Activated T-helper 1 cell treated with anti-CD3 and anti-CD28 coated beads, Interleukin-12 subunit alpha, Interleukin-12 subunit beta, Interleukin-2, Interleukin-4 antibody, amounts not matched to agents 30 ng/mL and 10 ng/mL and 1 ng/mL, durations not matched to agents 14 hours and 24 hours and 36 hours (primary cell): ENCODE measurements at regions of chr5 and their contacts with region 1.

Region 1: DNA sequence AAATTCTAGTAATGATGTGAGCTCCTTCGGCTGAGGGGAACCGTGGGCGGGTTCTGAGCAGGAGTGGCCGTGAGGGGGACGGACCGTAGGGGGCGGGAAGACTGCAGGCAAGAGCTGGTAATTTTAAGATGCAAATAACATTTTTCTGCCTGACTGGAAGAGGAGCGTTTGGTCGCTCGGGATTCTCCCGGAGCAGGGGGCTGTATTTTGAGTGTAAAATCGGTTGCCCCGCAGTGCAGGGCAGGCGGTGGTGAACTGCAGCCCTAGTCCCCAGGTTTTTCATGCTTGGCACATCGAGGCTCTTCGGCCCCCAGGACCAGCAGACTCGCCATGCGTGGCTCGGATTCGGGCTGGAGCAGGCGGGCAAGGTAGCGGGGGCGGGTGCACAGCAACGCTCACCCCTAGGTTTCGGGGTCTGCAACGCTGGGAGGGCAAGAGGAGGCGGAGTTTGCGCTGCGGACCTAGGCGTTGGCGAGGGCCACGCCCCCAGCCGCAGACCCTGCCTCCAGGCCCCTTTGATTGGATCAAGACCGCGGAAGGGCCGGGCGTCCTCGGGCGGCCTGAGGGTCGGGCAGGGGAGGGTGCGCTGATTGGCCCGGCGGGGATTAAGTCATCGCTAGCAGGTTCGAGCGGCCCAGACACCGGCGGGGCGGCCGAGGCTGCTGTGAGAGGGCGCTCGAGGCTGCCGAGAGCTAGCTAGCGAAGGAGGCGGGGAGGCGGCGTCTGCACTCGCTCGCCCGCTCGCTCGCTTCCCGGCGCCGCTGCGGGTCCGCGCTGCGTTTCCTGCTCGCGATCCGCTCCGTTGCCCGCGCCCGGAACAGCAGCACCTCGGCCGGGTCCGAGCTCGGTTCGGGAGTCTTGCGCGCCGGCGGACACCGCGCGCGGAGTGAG is at the start of gene ARHGAP26:
- DNase-seq: peak; percentile 93
- H3K4me3 Mint-ChIP-seq: peak within 1 kb of the TSS; percentile 91
- H3K27ac Mint-ChIP-seq: peak within 1 kb of the TSS; percentile 89
- H3K4me1 Mint-ChIP-seq: peaks cover 43% of the 10 kb centered on the region
- H3K27me3 Mint-ChIP-seq: peaks cover 7% of the 10 kb centered on the region
- total RNA-seq, gene ARHGAP26: 20.0 and 21.2 TPM in 2 replicates

Region 2: GRCh38 chr5:142356716-142357473 is 413.1 kb before region 1 on chr5:
- intact Hi-C with region 1: loop called (anchors 2 kb)
- DNase-seq: peak; percentile 88
- H3K4me3 Mint-ChIP-seq: peak overlapping the region; percentile 84
- H3K27ac Mint-ChIP-seq: peak overlapping the region; percentile 92
- H3K4me1 Mint-ChIP-seq: peaks cover 58% of the 10 kb centered on the region
- H3K27me3 Mint-ChIP-seq: no peaks in the 10 kb centered on the region

Region 3: GRCh38 chr5:142474431-142475074 is 295.4 kb before region 1 on chr5:
- intact Hi-C with region 1: no loop called
- DNase-seq: no peak
- H3K4me3 Mint-ChIP-seq: no peak overlapping the region
- H3K27ac Mint-ChIP-seq: peak overlapping the region; percentile 34
- H3K4me1 Mint-ChIP-seq: peaks cover 15% of the 10 kb centered on the region
- H3K27me3 Mint-ChIP-seq: no peaks in the 10 kb centered on the region

Region 4: DNA sequence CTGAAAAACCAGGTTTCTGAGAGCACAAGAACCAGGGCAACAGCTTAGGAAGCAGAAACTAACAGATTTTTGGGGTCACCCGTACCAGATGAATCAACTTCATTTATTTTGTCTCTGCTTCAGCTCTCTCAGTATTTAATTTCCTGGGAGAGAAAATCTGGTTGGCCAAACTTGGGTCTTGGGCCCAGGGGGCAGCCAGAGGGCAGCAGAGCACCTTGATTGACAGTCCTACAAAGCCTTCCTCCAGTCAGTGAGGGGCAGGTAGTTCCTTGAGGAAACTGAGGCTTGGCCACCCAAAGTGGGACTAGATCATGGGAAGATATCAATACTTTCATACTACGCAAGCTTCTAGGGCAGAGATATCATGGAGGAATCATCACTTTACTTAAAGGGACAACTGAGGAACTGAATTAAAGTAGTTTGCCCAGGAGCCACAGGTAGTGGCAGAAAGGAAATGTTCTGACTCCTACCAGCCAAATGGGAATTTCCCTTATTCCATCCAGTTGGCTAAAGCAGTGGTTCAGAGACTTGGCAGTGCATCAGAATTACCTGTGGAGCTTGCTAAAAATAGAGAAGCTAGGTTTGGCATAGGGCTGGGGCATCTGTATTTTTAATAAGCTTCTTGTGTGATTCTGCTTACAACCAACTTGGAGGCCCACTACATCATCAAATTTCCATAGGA is 21.3 kb before region 1 on chr5:
- intact Hi-C with region 1: loop called (anchors 1 kb)
- DNase-seq: no peak
- H3K4me3 Mint-ChIP-seq: no peak overlapping the region
- H3K27ac Mint-ChIP-seq: no peak overlapping the region
- H3K4me1 Mint-ChIP-seq: peaks cover 16% of the 10 kb centered on the region
- H3K27me3 Mint-ChIP-seq: peaks cover 2% of the 10 kb centered on the region

Region 5: GRCh38 chr5:142800776-142801494 is 30.9 kb after region 1 on chr5:
- intact Hi-C with region 1: loop called (anchors 1 kb)
- DNase-seq: peak; percentile 53
- H3K4me3 Mint-ChIP-seq: peak overlapping the region; percentile 73
- H3K27ac Mint-ChIP-seq: peak overlapping the region; percentile 93
- H3K4me1 Mint-ChIP-seq: peaks cover 67% of the 10 kb centered on the region
- H3K27me3 Mint-ChIP-seq: no peaks in the 10 kb centered on the region

Region 6: GRCh38 chr5:142826741-142827732 is 57.1 kb after region 1 on chr5:
- intact Hi-C with region 1: loop called (anchors 1 kb)
- DNase-seq: no peak
- H3K4me3 Mint-ChIP-seq: peak overlapping the region; percentile 25
- H3K27ac Mint-ChIP-seq: peak overlapping the region; percentile 57
- H3K4me1 Mint-ChIP-seq: peaks cover 70% of the 10 kb centered on the region
- H3K27me3 Mint-ChIP-seq: no peaks in the 10 kb centered on the region

Region 7: DNA sequence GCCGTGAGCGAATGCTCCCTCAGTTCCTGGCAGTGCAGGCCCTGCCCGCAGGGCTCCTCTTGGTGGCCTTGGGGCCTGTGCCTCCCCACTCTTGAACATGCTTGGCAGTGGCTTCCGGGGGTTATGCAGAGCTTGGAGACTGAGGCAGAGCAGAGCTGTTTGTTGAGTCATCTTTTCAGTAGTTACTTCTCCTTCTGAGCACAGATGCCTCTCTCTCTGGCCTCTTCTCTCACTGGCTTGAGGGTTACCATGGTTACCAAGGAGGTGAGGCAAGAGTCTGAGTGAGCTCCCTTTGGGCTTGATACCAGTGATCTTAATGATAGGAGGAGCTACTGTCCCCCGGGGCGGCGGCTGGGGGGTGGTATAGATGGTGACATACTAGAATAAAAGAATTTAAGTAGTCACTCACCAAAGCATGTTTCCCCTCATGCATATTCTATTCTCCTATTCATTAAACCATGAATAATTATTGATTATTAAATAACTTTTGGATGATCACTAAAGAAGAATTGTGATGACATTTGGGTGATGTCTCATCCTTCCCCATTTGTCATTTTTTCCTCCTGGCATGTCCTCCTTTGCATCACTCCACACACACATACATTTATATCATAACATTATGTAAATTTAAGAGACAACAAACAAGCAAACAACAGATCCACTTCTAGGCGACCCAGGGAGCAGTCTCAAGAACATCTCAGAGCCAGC is 111.2 kb after region 1 on chr5:
- intact Hi-C with region 1: loop called (anchors 1 kb)
- DNase-seq: no peak
- H3K4me3 Mint-ChIP-seq: no peak overlapping the region
- H3K27ac Mint-ChIP-seq: no peak overlapping the region
- H3K4me1 Mint-ChIP-seq: peaks cover 6% of the 10 kb centered on the region
- H3K27me3 Mint-ChIP-seq: no peaks in the 10 kb centered on the region

Region 8: GRCh38 chr5:144170276-144171024 is 1400.5 kb after region 1 on chr5 and contains the starts of genes KCTD16 and YIPF5:
- intact Hi-C with region 1: loop called (anchors 1 kb)
- DNase-seq: peak; percentile 98
- H3K4me3 Mint-ChIP-seq: peak within 1 kb of the TSS; percentile 96
- H3K27ac Mint-ChIP-seq: peak within 1 kb of the TSS; percentile 80
- H3K4me1 Mint-ChIP-seq: peaks cover 45% of the 10 kb centered on the region
- H3K27me3 Mint-ChIP-seq: peaks cover 13% of the 10 kb centered on the region
- total RNA-seq, gene KCTD16: not detected in 2 replicates
- total RNA-seq, gene YIPF5: 34.2 and 37.9 TPM in 2 replicates